Adrenal gland (tissue), 19 donors: ENCODE measurements at regions of chr15 and their contacts with region 1.

Region 1: GRCh38 chr15:40160689-40161688 is at the start of gene BUB1B:
- DNase-seq: peak; percentile 84 to 97 (median 93)
- H3K4me3 ChIP-seq: peak within 1 kb of the TSS; percentile 3 to 57 (median 47)
- H3K27ac ChIP-seq: no peak within 1 kb of the TSS
- H3K4me1 ChIP-seq: peaks cover 0 to 8% of the 10 kb centered on the region in 2 donors
- H3K27me3 ChIP-seq: no peaks in the 10 kb centered on the region
- CTCF ChIP-seq: no peak
- POLR2A ChIP-seq: no peak
- total RNA-seq, gene BUB1B: 1.1 to 13.7 (median 2.7) TPM

Region 2: DNA sequence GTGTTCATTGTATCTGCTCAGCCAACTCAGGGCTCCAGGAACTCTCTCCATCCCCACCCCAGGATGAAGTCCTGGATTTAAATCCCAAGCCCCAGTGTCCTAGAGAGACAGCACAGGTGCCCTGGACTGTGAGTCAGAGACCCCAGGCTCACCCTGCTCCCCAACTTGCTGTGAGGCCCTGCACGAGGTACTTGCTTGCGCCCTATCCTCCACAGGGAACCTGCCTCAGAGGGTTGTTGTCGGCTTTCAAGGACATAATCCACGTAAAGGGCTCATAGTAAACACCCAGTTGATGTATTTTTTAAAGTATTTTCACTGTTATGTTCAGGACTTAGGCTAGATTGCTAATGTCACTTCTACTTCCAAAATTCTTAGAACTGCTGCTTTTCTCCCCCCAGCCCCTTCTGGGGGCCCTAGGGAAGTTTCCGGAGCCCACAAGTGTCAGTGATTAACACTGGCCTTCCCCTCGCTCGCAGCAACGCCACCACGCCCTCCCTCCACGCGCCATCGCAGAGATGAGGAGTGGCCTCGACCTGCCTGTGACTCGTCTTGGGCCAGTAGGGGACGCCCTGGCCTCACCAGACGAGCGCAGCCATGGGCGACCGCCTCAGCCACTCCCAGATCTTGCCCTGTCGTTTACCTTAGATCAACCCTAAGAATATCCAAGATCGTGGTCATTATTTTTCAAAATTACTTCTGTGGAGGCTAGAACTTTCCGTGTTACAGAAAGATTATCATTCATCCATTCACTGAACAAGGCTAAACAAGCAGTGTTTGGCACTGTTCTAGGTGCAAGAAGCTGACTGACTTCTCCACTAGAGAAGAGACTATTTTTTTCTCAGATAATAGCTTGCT is 116.0 kb before region 1 on chr15:
- intact Hi-C with region 1: loop called in 1 of 2 experiments (anchors 10 kb)
- DNase-seq: peak; percentile 86 to 94 (median 89)
- H3K4me3 ChIP-seq: no peak overlapping the region
- H3K27ac ChIP-seq: peak overlapping the region in 1 of 5 donors; percentile 19
- H3K4me1 ChIP-seq: peaks cover 23 to 40% of the 10 kb centered on the region in 2 donors
- H3K27me3 ChIP-seq: no peaks in the 10 kb centered on the region
- CTCF ChIP-seq: peak; percentile 72 to 95 (median 91)
- POLR2A ChIP-seq: no peak